ENCODE measurements at regions of chr12 and their contacts with region 1.

Region 1: DNA sequence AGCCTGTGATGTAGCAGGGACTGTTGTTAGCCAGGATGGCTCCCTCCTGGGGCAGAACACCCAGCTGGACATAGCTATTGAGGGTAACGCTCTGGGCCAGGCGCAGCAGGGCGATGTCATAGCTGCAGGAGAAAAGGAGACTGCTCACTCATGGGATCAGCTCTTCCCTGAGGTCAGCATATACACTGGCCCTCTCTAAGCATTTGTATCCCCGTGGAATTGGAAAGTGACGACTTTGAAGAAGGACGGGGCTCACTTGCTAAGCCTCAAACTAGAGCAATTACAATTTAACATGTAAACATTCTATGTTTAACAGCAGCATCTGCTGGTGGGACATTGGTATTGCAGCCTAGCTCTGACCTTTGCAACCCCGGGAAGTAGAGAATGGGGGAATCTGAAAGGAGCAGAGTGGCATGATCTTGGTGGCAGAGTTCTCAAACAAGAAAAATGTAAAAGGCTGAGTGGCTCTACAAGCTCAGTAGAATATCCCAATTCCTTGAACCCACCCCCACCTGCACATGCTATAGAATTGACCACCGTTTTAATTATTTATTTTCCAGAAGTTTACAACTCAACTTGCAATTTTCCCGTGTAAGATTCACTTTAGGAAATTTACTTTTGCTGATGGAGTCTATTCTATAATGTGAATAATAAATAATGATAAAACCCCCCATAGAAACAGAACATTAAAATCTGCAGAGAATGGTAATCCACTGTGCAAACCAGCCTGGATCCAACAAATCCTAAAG is 5.0 kb downstream of the CELA1 start:
- DNase-seq: peak; percentile 54 to 89
- ATAC-seq: peak; percentile 95 to 99 (median 97)
- H3K4me3 ChIP-seq: no peak overlapping the region
- H3K4me3 Mint-ChIP-seq: peak overlapping the region; percentile 77
- H3K27ac ChIP-seq: peak overlapping the region; percentile 8
- H3K27ac Mint-ChIP-seq: peak overlapping the region; percentile 79 to 88
- H3K4me1 ChIP-seq: peaks cover 9% of the 10 kb centered on the region
- H3K4me1 Mint-ChIP-seq: peaks cover 7 to 14% of the 10 kb centered on the region in 2 donors
- H3K27me3 ChIP-seq: no peaks in the 10 kb centered on the region
- H3K27me3 Mint-ChIP-seq: no peaks in the 10 kb centered on the region
- CTCF ChIP-seq: peak; percentile 96

Region 2: DNA sequence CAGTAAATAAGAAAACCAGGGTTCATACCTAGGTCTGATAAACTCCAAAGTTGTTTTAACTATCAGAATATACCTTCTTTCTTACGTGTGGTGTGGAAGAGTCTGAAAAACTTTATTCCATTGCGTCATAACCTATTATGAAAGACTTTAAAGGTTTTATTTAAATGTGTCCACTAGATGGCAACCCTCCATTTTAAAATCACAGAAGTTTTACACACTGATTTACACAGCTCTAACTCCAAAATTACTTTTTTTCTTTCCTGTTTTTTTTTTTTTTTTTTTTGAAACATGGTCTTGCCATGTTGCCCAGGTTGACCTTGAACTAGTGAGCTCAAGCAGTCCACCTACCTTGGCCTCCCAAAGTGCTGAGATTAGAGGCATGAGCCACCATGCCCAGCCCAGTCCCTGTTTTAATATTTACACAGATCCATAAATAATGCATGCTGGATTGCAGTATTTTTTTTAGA is 516.0 kb before region 1 on chr12:
- intact Hi-C with region 1: loop called (anchors 1 kb)
- DNase-seq: peak in 1 of 2 donors; percentile 79
- ATAC-seq: peak; percentile 74 to 91 (median 87)
- H3K4me3 ChIP-seq: no peak overlapping the region
- H3K4me3 Mint-ChIP-seq: no peak overlapping the region
- H3K27ac ChIP-seq: peak overlapping the region; percentile 32
- H3K27ac Mint-ChIP-seq: peak overlapping the region; percentile 89 to 93
- H3K4me1 ChIP-seq: no peaks in the 10 kb centered on the region
- H3K4me1 Mint-ChIP-seq: peaks cover 6% of the 10 kb centered on the region in 2 donors
- H3K27me3 ChIP-seq: no peaks in the 10 kb centered on the region
- H3K27me3 Mint-ChIP-seq: no peaks in the 10 kb centered on the region
- CTCF ChIP-seq: peak; percentile 71

Region 3: GRCh38 chr12:51172515-51173431 is 168.7 kb before region 1 on chr12 and contains the start of gene TFCP2:
- intact Hi-C with region 1: loop called (anchors 1 kb)
- DNase-seq: peak; percentile 92 to 98
- ATAC-seq: peak; percentile 96 to 99 (median 98)
- H3K4me3 ChIP-seq: peak within 1 kb of the TSS; percentile 85
- H3K4me3 Mint-ChIP-seq: peak within 1 kb of the TSS; percentile 93
- H3K27ac ChIP-seq: peak within 1 kb of the TSS; percentile 94
- H3K27ac Mint-ChIP-seq: no peak within 1 kb of the TSS
- H3K4me1 ChIP-seq: peaks cover 22% of the 10 kb centered on the region
- H3K4me1 Mint-ChIP-seq: peaks cover 7 to 22% of the 10 kb centered on the region in 2 donors
- H3K27me3 ChIP-seq: no peaks in the 10 kb centered on the region
- H3K27me3 Mint-ChIP-seq: no peaks in the 10 kb centered on the region
- CTCF ChIP-seq: no peak
- total RNA-seq, gene TFCP2: 26.6 to 34.8 (median 34.8) TPM

Region 4: DNA sequence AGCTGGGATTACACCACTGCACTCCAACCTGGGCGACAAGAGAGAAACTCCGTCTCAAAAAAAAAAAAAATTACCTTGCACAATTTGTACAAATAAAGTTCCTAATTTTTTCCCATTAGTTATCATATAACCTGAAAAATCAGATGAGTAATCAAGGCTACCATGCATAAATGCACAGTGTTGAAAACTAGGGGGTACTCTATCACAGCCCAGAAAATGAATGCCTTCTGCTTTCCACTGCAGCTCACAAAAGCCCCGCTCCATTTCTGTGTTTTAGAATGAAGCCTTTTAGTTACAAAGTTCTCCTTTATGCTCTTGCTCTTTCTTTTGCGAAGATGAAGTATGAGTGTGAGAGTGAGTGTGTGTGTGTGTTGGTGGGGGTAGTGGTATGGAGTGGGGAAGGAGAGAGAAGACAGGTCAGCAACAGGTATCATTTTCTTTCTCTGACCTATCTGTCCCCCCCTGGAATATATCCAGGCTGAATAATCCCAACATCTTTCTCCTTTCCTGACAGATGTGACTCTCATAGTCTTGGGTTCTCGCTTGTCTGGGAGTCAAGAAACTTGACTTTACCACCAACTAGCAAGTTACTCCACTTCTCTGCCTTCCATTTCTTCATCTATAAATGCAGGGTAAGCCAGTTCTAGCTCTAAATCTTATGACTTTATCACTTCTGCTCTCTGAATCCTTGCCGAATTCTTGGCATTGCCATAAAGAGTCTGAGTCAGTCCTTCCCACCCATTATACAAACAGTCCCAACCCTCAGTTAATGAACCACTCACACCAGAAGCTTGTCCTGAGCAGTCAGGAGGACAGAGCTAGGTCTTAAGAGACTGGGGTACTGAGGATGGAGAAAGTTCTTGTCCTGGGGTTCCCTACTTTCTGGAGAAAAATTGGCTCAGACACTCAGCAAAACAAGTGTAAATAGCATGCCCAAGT is 33.5 kb before region 1 on chr12:
- intact Hi-C with region 1: loop called (anchors 1 kb)
- DNase-seq: peak in 1 of 2 donors; percentile 43
- ATAC-seq: peak; percentile 56 to 63 (median 58)
- H3K4me3 ChIP-seq: no peak overlapping the region
- H3K4me3 Mint-ChIP-seq: peak overlapping the region; percentile 73
- H3K27ac ChIP-seq: peak overlapping the region; percentile 2
- H3K27ac Mint-ChIP-seq: peak overlapping the region; percentile 83 to 88
- H3K4me1 ChIP-seq: peaks cover 21% of the 10 kb centered on the region
- H3K4me1 Mint-ChIP-seq: peaks cover 73 to 78% of the 10 kb centered on the region in 2 donors
- H3K27me3 ChIP-seq: no peaks in the 10 kb centered on the region
- H3K27me3 Mint-ChIP-seq: no peaks in the 10 kb centered on the region
- CTCF ChIP-seq: no peak

Region 5: DNA sequence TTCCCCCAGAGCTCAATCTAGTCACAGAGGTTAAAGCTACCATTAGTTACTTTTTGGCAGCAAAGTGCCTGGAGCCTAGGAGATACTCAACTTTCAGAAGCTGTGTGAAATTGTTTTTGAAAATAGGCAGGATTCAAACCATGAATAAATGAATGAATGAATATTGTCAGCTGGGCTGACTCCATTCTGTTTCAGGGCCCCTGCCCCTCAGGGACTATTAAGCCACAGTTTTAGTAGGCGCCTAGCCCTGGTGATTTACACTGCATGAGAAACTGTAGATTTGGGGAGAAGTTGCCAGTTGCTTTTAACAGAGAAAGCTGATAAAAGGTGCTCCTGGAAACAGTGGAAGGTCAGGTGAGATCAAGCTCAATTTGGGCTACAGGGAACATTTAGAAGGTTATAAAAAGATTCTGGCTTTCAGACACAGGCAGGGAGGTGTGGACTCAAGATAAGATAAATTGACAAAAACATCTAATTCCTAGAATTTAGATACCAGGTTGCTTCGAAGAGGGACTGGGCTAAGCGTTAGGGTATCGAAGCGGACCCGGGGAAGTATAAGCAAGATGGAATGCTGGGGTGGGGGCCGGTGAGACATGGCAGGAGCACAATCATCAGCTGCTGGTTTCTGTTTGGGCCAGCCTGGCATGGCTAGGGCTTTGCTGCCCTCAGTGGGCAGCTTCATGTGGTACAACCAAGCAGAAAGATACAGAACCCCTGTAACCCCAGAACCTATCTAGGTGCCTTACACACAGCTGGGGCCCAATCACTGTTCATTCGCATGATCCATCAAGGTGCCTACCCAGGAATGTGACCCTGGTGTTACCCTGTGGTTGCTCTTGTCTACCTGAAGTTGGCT is 20.0 kb after region 1 on chr12:
- intact Hi-C with region 1: no loop called
- DNase-seq: no peak
- ATAC-seq: no peak
- H3K4me3 ChIP-seq: no peak overlapping the region
- H3K4me3 Mint-ChIP-seq: no peak overlapping the region
- H3K27ac ChIP-seq: no peak overlapping the region
- H3K27ac Mint-ChIP-seq: peak overlapping the region in 1 of 2 donors; percentile 52
- H3K4me1 ChIP-seq: peaks cover 6% of the 10 kb centered on the region
- H3K4me1 Mint-ChIP-seq: no peaks in the 10 kb centered on the region
- H3K27me3 ChIP-seq: no peaks in the 10 kb centered on the region
- H3K27me3 Mint-ChIP-seq: no peaks in the 10 kb centered on the region
- CTCF ChIP-seq: no peak

Measured in natural killer cell (primary cell).